Activated T-helper 2 cell treated with anti-CD3 and anti-CD28 coated beads, Interferon-gamma antibody, Interleukin-2, Interleukin-4, amounts not matched to agents 10 μg/mL and 5 μg/mL and 100 μg/mL, durations not matched to agents 14 hours and 24 hours and 36 hours (primary cell): ENCODE measurements at regions of chr19 and their contacts with region 1.

Region 1: DNA sequence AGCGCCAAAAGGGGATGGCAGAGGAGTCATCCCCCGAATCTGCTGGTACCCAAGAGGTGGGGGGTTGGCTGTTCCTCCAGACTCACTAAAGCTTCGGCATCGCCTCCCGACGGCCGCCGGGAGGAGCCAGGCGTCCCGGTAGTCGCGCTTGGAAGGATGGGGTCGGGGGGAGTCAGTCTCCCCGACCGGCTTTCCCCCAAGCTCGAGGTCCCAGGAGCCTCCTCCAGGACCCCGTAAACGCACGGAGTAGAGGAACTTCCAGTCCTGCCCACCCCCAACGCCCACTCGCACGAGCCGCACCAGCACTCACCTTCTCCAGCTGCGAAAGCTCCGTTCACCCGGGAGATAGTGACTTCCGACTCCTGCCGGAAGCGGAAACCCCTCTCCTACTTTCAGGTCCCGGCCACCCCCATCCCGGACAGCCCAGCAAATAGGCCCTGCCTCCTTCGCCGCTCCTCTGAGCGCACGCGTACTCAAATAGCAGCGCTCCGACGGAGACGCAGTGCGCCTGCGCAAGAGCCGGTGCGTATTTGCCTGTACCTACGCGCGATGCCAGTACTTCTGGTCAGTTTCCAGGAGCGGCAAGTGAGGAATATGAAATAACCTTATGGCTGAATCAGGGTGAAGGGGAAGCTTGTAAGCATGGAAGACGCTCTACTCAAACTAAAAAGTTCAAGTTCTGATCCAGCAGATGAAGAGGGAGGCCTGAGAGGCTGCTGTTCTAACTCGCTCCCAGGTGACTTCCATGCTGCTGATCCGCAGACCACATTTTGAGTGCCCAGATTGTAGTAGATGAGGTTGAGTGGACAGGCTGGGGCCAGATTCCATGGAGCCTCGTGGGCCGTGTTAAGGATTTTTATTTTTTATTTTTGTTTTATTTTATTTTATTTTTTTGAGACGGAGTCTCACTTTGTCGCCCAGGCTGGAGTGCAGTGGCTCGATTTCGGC is at the start of gene ELOF1:
- DNase-seq: peak; percentile 96
- H3K4me3 Mint-ChIP-seq: peak within 1 kb of the TSS; percentile 86
- H3K27ac Mint-ChIP-seq: peak within 1 kb of the TSS; percentile 89
- H3K4me1 Mint-ChIP-seq: peaks cover 38% of the 10 kb centered on the region
- H3K27me3 Mint-ChIP-seq: no peaks in the 10 kb centered on the region
- total RNA-seq, gene ELOF1: 64.1 and 68.3 TPM in 2 replicates

Region 2: DNA sequence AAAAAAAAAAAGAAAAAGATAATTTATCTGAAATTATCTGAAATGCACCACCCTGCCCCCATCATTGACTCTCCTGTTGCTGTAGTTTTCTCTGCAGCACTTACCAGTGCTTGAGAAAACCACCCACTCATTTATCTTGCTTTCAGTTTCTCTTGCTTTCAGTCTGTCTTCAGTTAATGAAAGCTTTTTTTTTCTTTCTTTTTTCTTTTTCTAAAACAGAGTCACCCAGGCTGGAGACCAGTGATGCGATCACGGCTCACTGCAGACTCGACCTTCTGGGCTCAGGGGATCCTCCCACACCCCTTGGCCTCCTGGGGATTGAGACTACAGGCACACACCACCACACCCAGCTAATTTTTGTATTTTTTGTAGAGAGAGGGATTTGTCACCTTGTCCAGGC is 22.6 kb after region 1 on chr19:
- intact Hi-C with region 1: loop called (anchors 1 kb)
- DNase-seq: peak; percentile 56
- H3K4me3 Mint-ChIP-seq: peak overlapping the region; percentile 74
- H3K27ac Mint-ChIP-seq: peak overlapping the region; percentile 96
- H3K4me1 Mint-ChIP-seq: peaks cover 20% of the 10 kb centered on the region
- H3K27me3 Mint-ChIP-seq: no peaks in the 10 kb centered on the region

Region 3: GRCh38 chr19:11587302-11587974 is 28.3 kb after region 1 on chr19:
- intact Hi-C with region 1: loop called (anchors 1 kb)
- DNase-seq: peak; percentile 75
- H3K4me3 Mint-ChIP-seq: no peak overlapping the region
- H3K27ac Mint-ChIP-seq: peak overlapping the region; percentile 63
- H3K4me1 Mint-ChIP-seq: peaks cover 9% of the 10 kb centered on the region
- H3K27me3 Mint-ChIP-seq: no peaks in the 10 kb centered on the region

Region 4: DNA sequence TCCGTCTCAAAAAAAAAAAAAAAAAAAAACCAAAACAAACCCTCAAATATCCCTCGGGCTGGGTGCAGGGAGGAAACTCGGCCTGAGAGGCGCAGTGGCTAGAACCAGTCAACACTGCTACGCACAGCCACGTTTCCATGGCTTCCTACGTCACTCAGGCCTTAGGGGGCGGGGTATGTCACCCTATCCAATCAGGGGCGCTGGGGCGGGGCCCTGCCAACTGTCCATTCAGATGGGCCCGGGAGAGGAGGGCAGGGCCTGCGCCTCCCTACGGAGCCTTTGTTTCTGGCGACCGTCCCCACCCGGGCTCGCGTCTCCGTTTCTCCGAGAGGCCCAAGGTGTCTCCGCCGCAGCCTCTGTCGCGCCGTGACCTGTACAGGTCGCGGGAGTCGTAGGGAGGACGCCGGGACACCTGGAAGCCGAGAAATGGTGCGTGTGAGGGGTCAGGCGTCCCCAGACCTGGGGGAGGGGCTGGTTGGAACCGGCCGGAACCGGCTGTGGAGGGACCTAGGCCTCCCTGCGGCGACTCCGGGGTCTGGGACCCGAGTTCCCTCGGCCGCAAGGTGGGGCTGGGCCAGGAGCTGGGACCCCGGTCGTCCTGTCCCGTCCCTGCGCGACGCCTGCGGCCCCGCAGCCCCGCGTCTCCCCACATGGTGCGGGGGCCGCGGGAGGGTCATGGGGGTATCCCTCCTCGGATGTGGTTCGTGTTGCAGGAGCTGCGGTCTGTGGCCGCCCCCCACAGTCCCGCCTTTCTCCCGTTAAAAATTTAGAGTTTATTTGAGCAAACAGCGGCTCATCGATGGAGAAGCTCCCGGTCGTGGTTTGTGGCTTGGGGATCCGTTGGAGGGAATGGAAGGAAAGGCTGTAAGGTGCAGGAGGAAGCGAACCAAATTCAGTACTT is 38.3 kb after region 1 on chr19 and contains the start of gene ZNF627:
- intact Hi-C with region 1: loop called (anchors 1 kb)
- DNase-seq: peak; percentile 97
- H3K4me3 Mint-ChIP-seq: peak within 1 kb of the TSS; percentile 94
- H3K27ac Mint-ChIP-seq: peak within 1 kb of the TSS; percentile 85
- H3K4me1 Mint-ChIP-seq: peaks cover 8% of the 10 kb centered on the region
- H3K27me3 Mint-ChIP-seq: no peaks in the 10 kb centered on the region
- total RNA-seq, gene ZNF627: 8.3 and 10.9 TPM in 2 replicates